Activated CD4-positive, alpha-beta memory T cell treated with anti-CD3 and anti-CD28 coated beads, Interleukin-2, amount 10 ng/mL, durations not matched to agents 7 days and 5 days (primary cell): ENCODE measurements at regions of chr18 and their contacts with region 1.

Region 1: DNA sequence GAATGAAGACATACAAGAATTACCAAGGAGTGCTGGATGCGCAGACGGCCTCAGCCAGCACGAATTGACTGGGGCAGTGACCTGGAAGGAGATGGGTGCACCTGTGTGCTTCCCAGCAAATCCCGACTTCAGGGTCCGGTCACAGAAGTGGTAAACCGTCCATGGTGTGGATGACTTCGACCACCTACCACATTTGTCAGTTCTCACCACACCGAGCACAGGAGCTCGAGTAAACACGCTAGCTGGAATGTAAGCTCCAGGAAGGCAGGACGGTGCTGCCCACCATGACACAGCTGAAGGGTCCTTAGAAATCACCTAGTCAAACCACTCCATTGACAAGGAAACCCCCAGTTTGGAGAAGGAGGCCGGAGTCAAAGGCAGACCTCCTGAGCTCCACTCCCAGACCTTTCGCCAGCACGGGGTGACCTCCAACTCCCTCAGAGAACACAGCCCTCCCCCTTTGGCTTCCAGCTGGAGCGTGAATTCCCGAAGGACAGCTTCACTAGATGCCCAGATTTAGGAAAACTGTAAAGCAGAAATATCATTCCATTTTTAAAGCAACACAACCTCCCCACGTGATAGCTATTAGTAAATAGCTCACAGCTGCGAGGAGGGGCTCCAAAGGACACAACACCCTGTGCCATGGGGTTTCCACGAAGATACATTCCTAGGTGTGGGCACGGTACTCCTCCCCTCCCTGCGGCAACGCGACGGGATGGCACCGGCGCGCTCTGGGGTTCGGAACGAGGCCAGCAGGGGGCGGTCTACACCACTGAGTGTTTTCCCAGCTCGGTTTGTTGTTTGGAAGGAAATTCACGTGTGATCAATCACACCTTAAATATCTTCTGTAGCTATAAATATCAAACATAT is 34.1 kb upstream of the GNAL start:
- DNase-seq: peak; percentile 47
- H3K4me3 Mint-ChIP-seq: no peak overlapping the region
- H3K27ac Mint-ChIP-seq: no peak overlapping the region
- H3K4me1 Mint-ChIP-seq: peaks cover 4% of the 10 kb centered on the region
- H3K27me3 Mint-ChIP-seq: peaks cover 38% of the 10 kb centered on the region

Region 2: GRCh38 chr18:11665587-11665986 is 10.6 kb after region 1 on chr18:
- CTCF ChIA-PET with region 1: interaction called, 16 read pairs
- POLR2A ChIA-PET with region 1: no interaction called
- DNase-seq: no peak
- H3K4me3 Mint-ChIP-seq: no peak overlapping the region
- H3K27ac Mint-ChIP-seq: no peak overlapping the region
- H3K4me1 Mint-ChIP-seq: no peaks in the 10 kb centered on the region
- H3K27me3 Mint-ChIP-seq: peaks cover 9% of the 10 kb centered on the region